A549 (cell line): ENCODE measurements at regions of chr14 and their contacts with region 1.

Region 1: GRCh38 chr14:37594238-37594914 is 673 bp downstream of the FOXA1 start:
- DNase-seq: peak; percentile 75 to 92
- ATAC-seq: peak; percentile 26 to 37
- H3K4me3 ChIP-seq: peak overlapping the region; percentile 92
- H3K27ac ChIP-seq: peak overlapping the region; percentile 90 to 94
- H3K4me1 ChIP-seq: peaks cover 18% of the 10 kb centered on the region
- CTCF ChIP-seq: peak; percentile 83
- EP300 ChIP-seq: no peak
- POLR2A ChIP-seq: no peak
- RAD21 ChIP-seq: peak; percentile 65 to 78

Region 2: GRCh38 chr14:37246427-37246914 is 347.9 kb before region 1 on chr14:
- CTCF ChIA-PET with region 1: interaction called, 19 read pairs
- POLR2A ChIA-PET with region 1: no interaction called
- DNase-seq: peak; percentile 25 to 61
- ATAC-seq: peak in 1 of 2 experiments; percentile 62; a peak in 4 of 6 replicates
- H3K4me3 ChIP-seq: no peak overlapping the region
- H3K27ac ChIP-seq: no peak overlapping the region
- H3K4me1 ChIP-seq: no peaks in the 10 kb centered on the region; the same call in 2 of the 3 replicates
- CTCF ChIP-seq: peak; percentile 87
- EP300 ChIP-seq: no peak
- POLR2A ChIP-seq: no peak
- RAD21 ChIP-seq: peak; percentile 81 to 83

Region 3: GRCh38 chr14:37251778-37252177 is 342.6 kb before region 1 on chr14:
- CTCF ChIA-PET with region 1: interaction called, 19 read pairs
- POLR2A ChIA-PET with region 1: no interaction called
- DNase-seq: peak in 1 of 2 experiments; percentile 16
- ATAC-seq: no peak
- H3K4me3 ChIP-seq: no peak overlapping the region
- H3K27ac ChIP-seq: no peak overlapping the region
- H3K4me1 ChIP-seq: peaks cover 19% of the 10 kb centered on the region; the same call in 2 of the 3 replicates
- CTCF ChIP-seq: peak; percentile 26; the same call in 2 of the 3 replicates
- EP300 ChIP-seq: no peak
- POLR2A ChIP-seq: no peak
- RAD21 ChIP-seq: peak; percentile 48 to 69; a peak in 4 of 5 replicates

Region 4: DNA sequence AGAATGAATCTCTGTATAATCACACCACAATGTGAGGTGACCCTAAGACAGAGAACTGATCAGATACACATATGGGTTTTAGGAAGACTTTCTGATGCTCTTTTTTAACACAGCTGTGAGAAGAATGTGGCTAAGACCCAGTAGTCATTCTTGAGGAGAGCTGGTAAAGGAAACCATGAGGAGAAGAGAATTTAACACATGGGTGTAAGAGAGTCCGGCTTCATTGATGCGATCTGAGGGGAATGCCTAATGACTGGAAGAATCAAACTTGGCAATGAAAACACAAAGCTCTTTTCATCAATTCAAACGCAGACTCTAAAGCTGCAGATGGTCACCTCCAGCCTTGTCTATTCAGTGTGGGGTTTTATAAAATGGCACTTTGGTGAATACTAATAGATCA is 78.6 kb before region 1 on chr14:
- CTCF ChIA-PET with region 1: no interaction called
- POLR2A ChIA-PET with region 1: no interaction called
- DNase-seq: no peak
- ATAC-seq: no peak
- H3K4me3 ChIP-seq: no peak overlapping the region
- H3K27ac ChIP-seq: no peak overlapping the region
- H3K4me1 ChIP-seq: no peaks in the 10 kb centered on the region
- CTCF ChIP-seq: no peak
- EP300 ChIP-seq: no peak
- POLR2A ChIP-seq: no peak
- RAD21 ChIP-seq: no peak

Region 5: GRCh38 chr14:37889087-37889486 is 294.7 kb after region 1 on chr14:
- CTCF ChIA-PET with region 1: no interaction called
- POLR2A ChIA-PET with region 1: no interaction called
- DNase-seq: no peak
- ATAC-seq: no peak
- H3K4me3 ChIP-seq: no peak overlapping the region
- H3K27ac ChIP-seq: no peak overlapping the region
- H3K4me1 ChIP-seq: no peaks in the 10 kb centered on the region
- CTCF ChIP-seq: no peak
- EP300 ChIP-seq: no peak
- POLR2A ChIP-seq: no peak
- RAD21 ChIP-seq: no peak